ENCODE measurements at regions of chr2 and their contacts with region 1.

Region 1: DNA sequence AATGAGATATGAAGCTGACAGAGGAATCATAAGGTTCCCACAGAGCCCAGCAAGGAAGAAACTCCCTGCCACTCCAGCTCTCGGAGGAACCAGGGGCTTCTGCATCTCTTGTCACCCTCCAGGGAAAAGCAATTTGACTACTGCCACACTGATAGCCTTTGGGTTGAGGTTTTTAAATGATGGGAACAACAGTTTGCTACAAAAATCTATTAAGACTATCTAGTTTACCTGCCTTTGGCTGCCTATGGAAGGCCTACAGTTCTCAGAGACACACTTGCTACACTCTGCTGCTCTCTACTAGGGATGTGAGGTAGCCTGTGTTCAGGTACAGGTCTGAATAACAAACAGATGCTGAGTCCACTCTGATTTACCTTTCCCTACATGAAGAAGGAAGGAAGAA is 161.9 kb downstream of the NBAS start:
- DNase-seq: no peak

Region 2: GRCh38 chr2:13942111-13942510 is 1457.1 kb before region 1 on chr2:
- intact Hi-C with region 1: loop called in 1 of 2 experiments (anchors 5 kb)
- DNase-seq: no peak

Region 3: GRCh38 chr2:15359716-15360531 is 39.3 kb before region 1 on chr2:
- intact Hi-C with region 1: no loop called
- DNase-seq: no peak

Region 4: DNA sequence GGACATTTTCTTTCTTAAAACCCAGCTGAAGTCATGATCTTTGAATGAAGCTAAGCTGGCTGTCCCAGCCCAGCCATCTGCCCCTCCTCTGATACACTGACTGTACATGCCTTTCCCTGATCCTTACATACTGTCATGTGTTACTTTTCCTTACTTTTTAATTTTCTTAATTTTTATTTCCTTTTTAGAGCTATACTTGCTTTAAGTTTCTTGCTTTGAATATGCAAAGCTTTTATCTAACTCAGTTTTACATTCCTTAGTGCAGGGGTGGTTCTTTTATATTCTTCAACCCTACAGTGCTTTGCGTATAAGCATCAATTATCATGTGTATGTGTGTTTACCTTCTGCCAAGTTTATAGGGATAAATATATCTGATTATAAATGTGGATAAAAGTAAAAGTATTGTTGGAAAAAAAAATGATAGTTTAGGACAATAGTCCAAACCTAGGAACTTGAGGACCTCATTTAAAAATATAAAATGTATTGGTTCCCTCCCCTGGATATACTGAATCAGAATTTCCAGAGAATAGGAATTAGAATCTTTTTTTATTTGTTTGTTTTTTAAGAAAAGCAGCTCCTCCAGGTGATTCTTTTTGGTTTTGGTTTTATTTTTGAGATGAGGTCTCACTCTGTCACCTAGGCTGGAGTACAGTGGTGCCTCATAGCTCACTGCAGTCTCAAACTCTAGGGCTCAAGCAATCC is 210.3 kb after region 1 on chr2:
- intact Hi-C with region 1: no loop called
- DNase-seq: no peak

Measured in posterior vena cava (tissue), 2 donors.